Mammary epithelial cell (primary cell): ENCODE measurements at regions of chr7 and their contacts with region 1.

Region 1: GRCh38 chr7:99928994-99929729 is at the start of gene GJC3:
- DNase-seq: peak; percentile 59
- H3K4me3 ChIP-seq: peak within 1 kb of the TSS in 2 of 3 experiments; percentile 17 to 35
- H3K27ac ChIP-seq: no peak within 1 kb of the TSS
- H3K4me1 ChIP-seq: peaks cover 23% of the 10 kb centered on the region
- H3K27me3 ChIP-seq: no peaks in the 10 kb centered on the region
- CTCF ChIP-seq: peak; percentile 27 to 65
- total RNA-seq, gene GJC3: 0.38 TPM in 1 of 2 donors, not detected in the other

Region 2: DNA sequence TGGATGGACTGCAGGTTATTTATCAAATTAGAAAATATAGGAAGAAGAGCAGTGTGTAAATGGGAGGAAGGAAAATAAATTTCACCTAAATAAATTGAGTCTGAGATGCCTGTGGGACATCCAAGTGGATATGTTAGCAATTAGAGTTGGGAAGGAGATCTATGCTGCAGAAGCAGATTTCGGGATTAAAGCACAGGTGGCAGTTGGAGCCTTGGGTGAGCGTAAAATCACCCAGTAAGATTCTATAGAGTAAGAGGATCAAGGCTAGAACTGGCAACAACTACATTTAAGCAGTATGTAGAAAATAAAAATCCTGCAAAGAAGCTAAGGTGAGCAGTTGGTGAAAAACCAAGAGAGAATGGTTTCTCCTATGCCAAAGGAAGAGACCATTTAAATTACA is 18.2 kb before region 1 on chr7:
- CTCF ChIA-PET with region 1: no interaction called
- dilution Hi-C with region 1: no loop called
- in situ Hi-C with region 1: no loop called
- intact Hi-C with region 1: loop called (anchors 1 kb)
- DNase-seq: no peak
- H3K4me3 ChIP-seq: no peak overlapping the region
- H3K27ac ChIP-seq: no peak overlapping the region
- H3K4me1 ChIP-seq: peaks cover 8% of the 10 kb centered on the region
- H3K27me3 ChIP-seq: no peaks in the 10 kb centered on the region
- CTCF ChIP-seq: no peak

Region 3: DNA sequence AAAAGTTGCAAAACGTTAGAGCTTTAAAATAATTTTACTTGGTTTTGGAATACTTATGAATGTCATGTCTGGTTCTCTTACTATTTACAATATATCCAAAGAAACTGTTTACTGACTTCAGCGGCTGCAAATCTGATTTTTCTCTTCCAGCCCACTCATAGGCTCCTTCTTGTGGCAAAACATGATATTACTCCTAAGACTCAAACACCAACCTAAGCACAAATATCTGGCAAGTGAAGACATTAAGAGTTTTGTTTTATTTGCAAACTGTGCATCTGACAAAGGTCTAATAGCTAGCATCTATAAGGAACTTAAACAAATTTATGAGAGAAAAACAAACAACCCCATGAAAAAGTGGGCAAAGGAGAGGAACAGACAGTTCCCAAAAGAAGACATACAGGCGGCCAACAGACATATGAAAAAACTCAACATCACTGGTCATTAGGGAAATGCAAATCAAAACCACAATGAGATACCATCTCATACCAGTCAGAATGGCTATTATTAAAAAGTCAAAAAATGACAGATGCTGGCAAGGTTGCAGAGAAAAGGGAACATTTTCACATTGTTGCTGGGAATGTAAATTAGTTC is 20.6 kb after region 1 on chr7:
- CTCF ChIA-PET with region 1: no interaction called
- dilution Hi-C with region 1: no loop called
- in situ Hi-C with region 1: no loop called
- intact Hi-C with region 1: loop called (anchors 2 kb)
- DNase-seq: no peak
- H3K4me3 ChIP-seq: no peak overlapping the region
- H3K27ac ChIP-seq: no peak overlapping the region
- H3K4me1 ChIP-seq: no peaks in the 10 kb centered on the region
- H3K27me3 ChIP-seq: no peaks in the 10 kb centered on the region
- CTCF ChIP-seq: peak; percentile 35 to 53

Region 4: GRCh38 chr7:100065452-100066186 is 136.5 kb after region 1 on chr7:
- CTCF ChIA-PET with region 1: no interaction called
- dilution Hi-C with region 1: no loop called
- in situ Hi-C with region 1: no loop called
- intact Hi-C with region 1: no loop called
- DNase-seq: no peak
- H3K4me3 ChIP-seq: no peak overlapping the region
- H3K27ac ChIP-seq: no peak overlapping the region
- H3K4me1 ChIP-seq: no peaks in the 10 kb centered on the region
- H3K27me3 ChIP-seq: no peaks in the 10 kb centered on the region
- CTCF ChIP-seq: no peak